HEK293 (cell line): ENCODE measurements at regions of chr14 and their contacts with region 1.

Region 1: GRCh38 chr14:80930836-80931389 is 10.6 kb downstream of the CEP128 start:
- H3K4me3 ChIP-seq: no peak overlapping the region
- H3K27ac ChIP-seq: no peak overlapping the region
- H3K4me1 ChIP-seq: no peaks in the 10 kb centered on the region
- CTCF ChIP-seq: no peak

Region 2: DNA sequence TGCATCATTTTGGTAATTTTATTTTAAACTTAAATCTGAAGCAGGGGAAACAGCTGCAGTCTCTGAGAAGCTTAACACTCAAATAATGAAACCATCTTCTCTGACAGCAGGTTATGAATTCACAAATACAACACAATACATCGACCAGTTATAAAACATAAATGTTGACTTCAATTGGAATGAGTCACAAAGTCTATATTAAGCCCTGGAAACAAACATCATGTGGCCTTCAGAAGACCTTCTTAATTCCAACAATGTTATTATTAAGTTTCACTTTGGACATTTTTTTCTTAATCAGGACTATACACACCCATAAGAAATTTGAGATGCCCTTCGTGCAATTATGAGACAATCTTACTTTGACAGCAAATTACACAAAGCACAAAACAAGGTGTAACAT is 58.3 kb before region 1 on chr14:
- CTCF ChIA-PET with region 1: no interaction called
- POLR2A ChIA-PET with region 1: no interaction called
- H3K4me3 ChIP-seq: no peak overlapping the region
- H3K27ac ChIP-seq: no peak overlapping the region
- H3K4me1 ChIP-seq: no peaks in the 10 kb centered on the region
- CTCF ChIP-seq: no peak

Region 3: DNA sequence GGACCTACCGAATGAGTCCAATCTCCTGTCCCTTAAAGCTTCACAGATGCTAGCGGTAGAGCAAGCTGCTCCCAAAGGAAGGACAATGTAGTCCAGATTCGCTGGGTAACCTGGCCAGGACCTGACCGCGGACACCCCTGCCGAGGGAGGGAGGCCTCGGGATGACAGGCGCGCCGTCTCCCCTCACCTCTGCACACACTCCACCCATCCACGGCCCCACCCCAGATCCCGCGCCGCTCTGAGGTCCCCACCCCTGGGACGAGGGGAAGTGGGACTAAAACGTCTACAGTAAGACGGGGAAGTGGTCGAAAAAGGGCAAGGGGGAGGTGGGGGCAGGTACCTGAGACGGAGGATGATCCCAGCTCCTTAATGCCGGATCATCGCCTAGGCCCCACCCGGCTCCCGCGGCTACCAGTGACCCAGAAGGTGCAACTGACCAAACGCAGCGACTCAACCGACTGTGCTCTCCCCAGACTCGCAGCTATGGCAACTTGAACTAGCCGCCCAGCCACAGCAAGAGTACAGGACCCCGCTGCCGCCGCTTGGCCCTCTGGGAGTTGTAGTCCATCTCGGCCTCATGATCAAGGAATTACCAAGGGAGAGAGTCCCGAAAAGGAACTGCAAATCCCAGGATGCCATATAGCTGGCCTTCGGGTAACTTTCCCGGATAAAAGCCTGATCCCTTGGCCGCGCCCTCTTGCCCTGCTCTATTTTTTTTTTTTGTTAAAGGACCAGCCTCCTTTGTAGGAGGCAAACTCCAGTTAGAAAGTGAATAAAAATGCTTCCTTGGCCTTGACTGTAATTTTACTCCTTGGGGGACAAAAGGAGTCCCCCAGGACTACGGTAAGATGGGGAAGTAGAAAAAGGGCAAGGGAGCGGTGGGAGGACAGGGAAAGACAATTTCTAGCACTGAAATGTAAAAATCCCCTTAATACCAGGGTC is 10.6 kb after region 1 on chr14 and contains the start of gene CEP128:
- CTCF ChIA-PET with region 1: no interaction called
- POLR2A ChIA-PET with region 1: interaction called, 13 read pairs
- H3K4me3 ChIP-seq: peak within 1 kb of the TSS; percentile 96
- H3K27ac ChIP-seq: peak within 1 kb of the TSS; percentile 26; the same call in 1 of the 2 replicates
- H3K4me1 ChIP-seq: peaks cover 9% of the 10 kb centered on the region
- CTCF ChIP-seq: no peak

Region 4: GRCh38 chr14:81193924-81194633 is 263.2 kb after region 1 on chr14:
- CTCF ChIA-PET with region 1: no interaction called
- POLR2A ChIA-PET with region 1: no interaction called
- H3K4me3 ChIP-seq: no peak overlapping the region
- H3K27ac ChIP-seq: no peak overlapping the region
- H3K4me1 ChIP-seq: no peaks in the 10 kb centered on the region
- CTCF ChIP-seq: no peak